ENCODE measurements at regions of chr10 and their contacts with region 1.

Region 1: DNA sequence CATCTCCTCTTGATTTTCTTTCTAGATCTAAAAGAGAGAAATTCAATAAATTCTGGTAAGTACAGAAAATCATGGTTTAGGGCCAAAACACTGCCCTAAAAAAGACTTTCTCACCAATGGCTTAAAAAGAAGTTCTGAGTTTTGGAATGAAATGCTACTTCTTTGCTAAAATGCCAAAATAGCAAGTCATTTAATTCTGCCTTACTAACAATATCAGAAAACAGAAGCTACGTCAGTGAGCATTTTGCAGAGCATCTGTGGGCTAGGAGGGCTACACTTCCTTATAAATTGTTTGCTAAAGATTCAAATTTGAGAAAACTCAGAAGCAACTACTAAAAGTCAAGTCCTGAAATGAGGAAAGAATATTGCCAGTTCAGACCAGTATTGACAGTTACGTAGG is 560.8 kb upstream of the CELF2 start:
- DNase-seq: no peak
- ATAC-seq: no peak
- H3K4me3 ChIP-seq: no peak overlapping the region
- H3K4me3 Mint-ChIP-seq: no peak overlapping the region
- H3K27ac ChIP-seq: no peak overlapping the region
- H3K27ac Mint-ChIP-seq: no peak overlapping the region
- H3K4me1 ChIP-seq: no peaks in the 10 kb centered on the region
- H3K4me1 Mint-ChIP-seq: no peaks in the 10 kb centered on the region
- H3K27me3 ChIP-seq: no peaks in the 10 kb centered on the region
- H3K27me3 Mint-ChIP-seq: peaks cover 10% of the 10 kb centered on the region
- CTCF ChIP-seq: no peak

Region 2: DNA sequence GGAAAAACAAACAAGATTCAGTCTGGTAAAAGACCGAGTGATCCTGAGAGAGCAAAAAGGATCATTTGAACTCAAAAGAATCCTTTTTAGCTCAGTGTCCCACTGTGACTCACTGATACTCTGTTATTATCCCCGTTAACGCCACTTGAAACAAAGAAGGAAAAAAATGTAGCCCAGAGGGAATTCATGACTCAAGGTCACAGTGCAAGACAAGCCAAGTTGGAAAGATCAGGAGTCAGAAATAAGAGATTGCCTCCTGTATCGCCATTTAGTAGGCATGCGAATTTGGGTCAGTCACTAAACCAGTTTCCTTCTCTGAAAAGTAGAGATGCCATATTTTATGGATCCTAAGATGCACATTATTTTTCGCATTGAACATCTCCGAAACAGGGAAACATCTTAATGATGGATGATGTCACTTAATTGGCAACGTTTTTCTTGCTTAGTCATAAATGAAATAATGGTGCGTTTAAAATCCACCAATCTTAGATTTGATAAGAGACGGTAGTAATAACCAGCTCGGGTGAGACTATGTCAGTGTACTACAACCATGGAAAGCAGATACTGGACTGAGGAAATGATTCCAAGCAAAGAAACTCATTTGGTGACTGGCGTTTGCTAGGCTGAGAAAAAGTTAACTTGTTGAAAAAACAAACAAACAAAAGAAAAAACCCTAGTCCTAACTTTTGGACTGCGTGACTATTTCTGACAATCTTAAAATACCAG is 58.8 kb after region 1 on chr10:
- CTCF ChIA-PET with region 1: no interaction called
- POLR2A ChIA-PET with region 1: no interaction called
- intact Hi-C with region 1: loop called in 1 of 2 experiments (anchors 10 kb)
- DNase-seq: no peak
- ATAC-seq: no peak
- H3K4me3 ChIP-seq: no peak overlapping the region
- H3K4me3 Mint-ChIP-seq: no peak overlapping the region
- H3K27ac ChIP-seq: no peak overlapping the region
- H3K27ac Mint-ChIP-seq: no peak overlapping the region
- H3K4me1 ChIP-seq: no peaks in the 10 kb centered on the region
- H3K4me1 Mint-ChIP-seq: no peaks in the 10 kb centered on the region
- H3K27me3 ChIP-seq: no peaks in the 10 kb centered on the region
- H3K27me3 Mint-ChIP-seq: peaks cover 10% of the 10 kb centered on the region
- CTCF ChIP-seq: no peak

Region 3: DNA sequence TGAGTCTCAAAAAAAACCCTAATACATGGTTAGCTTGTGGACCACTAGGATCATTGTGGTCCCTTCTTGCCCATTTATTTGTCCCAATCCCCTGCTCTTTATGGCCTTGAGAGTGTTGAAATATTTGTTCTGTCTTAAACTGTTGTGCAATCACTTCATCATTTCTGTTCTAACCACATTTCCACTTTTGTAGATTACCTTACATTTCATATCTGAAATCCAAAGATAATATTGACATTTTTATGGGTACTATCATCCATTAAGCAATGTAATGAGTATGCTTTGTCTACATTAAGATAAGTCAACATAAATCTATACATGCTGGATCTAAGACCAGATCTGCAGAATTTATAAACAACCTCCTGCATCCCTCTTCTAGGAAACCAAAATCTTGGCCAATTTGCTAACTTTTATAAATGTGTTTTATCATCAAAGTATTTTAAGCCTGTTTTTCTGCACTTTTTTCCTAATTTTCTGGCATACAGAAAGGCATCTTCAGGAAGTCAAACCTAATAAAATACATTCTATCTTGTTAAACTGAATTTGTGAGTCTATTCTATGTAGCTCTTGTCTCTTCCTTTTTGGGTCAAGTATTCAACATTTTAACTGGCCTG is 201.4 kb after region 1 on chr10:
- CTCF ChIA-PET with region 1: no interaction called
- POLR2A ChIA-PET with region 1: no interaction called
- intact Hi-C with region 1: no loop called
- DNase-seq: no peak
- ATAC-seq: no peak
- H3K4me3 ChIP-seq: no peak overlapping the region
- H3K4me3 Mint-ChIP-seq: no peak overlapping the region
- H3K27ac ChIP-seq: no peak overlapping the region
- H3K27ac Mint-ChIP-seq: no peak overlapping the region
- H3K4me1 ChIP-seq: no peaks in the 10 kb centered on the region
- H3K4me1 Mint-ChIP-seq: no peaks in the 10 kb centered on the region
- H3K27me3 ChIP-seq: no peaks in the 10 kb centered on the region
- H3K27me3 Mint-ChIP-seq: peaks cover 14% of the 10 kb centered on the region
- CTCF ChIP-seq: no peak

Measured in CD8-positive, alpha-beta T cell (primary cell).